Heart right ventricle (tissue), 16 donors: ENCODE measurements at regions of chr12 and their contacts with region 1.

Region 1: DNA sequence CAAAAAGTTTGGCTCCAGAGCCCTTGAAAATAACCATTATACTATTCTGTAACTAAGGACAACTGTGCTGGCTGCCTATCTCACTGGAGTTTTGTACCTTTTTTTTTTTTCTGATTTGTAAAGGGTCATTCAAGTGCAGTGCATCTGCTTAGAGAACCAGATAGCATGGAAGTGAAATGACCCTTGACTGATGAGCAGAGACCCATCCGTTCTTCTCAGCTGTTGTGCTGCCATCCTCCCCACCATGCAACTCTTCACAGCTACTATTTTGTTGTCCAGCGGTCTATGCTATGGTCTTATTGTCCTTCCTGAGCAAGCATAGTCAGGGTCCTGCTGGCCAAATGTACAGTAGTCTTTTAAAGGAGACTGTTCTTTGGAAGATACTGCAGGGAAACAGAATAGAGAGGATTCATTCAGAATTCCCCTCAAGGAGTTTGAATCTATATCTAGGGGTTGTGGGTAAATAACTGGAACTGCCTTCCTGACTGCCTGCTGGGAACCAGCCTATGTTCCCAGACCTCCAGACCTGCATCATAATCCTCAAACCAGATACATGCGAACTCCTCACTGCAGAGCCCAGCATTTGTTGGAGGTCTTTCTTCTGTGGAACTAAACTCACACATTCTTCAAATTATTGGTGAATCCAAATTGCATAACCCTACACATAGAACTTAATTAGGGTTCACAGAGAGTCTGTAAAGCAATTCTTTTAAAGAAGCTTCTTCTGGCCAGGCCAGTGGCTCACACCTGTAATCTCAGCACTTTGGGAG is 41.1 kb downstream of the GPR19 start:
- DNase-seq: no peak
- ATAC-seq: no peak
- H3K4me3 ChIP-seq: no peak overlapping the region
- H3K27ac ChIP-seq: no peak overlapping the region
- H3K4me1 ChIP-seq: peaks cover 0 to 7% (median 0%) of the 10 kb centered on the region in 9 donors
- H3K27me3 ChIP-seq: no peaks in the 10 kb centered on the region
- CTCF ChIP-seq: no peak

Region 2: GRCh38 chr12:12384571-12385340 is 270.1 kb before region 1 on chr12:
- intact Hi-C with region 1: loop called in 9 of 10 experiments (anchors 5 to 10 kb)
- DNase-seq: no peak
- ATAC-seq: peak in 1 of 8 donors; percentile 10
- H3K4me3 ChIP-seq: no peak overlapping the region
- H3K27ac ChIP-seq: peak overlapping the region in 1 of 10 donors; percentile 57
- H3K4me1 ChIP-seq: peaks cover 0 to 31% (median 9%) of the 10 kb centered on the region in 9 donors
- H3K27me3 ChIP-seq: no peaks in the 10 kb centered on the region
- CTCF ChIP-seq: no peak

Region 3: GRCh38 chr12:12704593-12705230 is 49.8 kb after region 1 on chr12:
- intact Hi-C with region 1: loop called in 1 of 10 experiments (anchors 5 kb)
- DNase-seq: peak in 1 of 2 donors; percentile 63
- ATAC-seq: peak; percentile 94 to 99 (median 98)
- H3K4me3 ChIP-seq: no peak overlapping the region
- H3K27ac ChIP-seq: peak overlapping the region in 1 of 10 donors; percentile 15
- H3K4me1 ChIP-seq: peaks cover 0 to 11% (median 3%) of the 10 kb centered on the region in 9 donors
- H3K27me3 ChIP-seq: no peaks in the 10 kb centered on the region
- CTCF ChIP-seq: peak; percentile 58 to 95 (median 82)